ENCODE measurements at regions of chr1 and their contacts with region 1.

Region 1: DNA sequence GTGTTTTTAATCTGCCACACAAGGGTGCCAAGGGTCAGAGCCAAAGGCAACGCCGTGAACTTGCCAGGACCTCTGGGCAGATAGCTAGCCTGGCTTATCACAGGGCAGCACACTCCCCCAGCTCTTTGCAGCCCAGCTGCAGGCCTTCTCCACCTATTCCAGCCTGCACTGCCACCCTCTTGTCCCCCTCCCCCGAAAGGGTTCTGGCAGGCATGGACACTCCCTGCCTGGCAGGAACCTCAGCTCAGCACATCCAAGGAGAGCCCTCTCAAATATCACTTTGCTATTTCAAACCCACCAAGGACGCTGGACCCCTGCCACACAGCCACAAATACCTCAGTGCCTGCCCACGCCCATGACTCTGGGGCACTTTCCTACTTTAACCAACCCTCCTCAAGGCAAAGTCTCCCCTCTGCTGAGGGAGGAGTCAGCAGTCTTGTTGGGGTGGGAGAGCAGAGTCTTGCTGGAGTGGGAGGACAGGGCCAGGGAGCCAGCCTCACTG is 9.1 kb downstream of the SSBP3 start:
- DNase-seq: peak; percentile 74 to 90 (median 77)
- ATAC-seq: peak; percentile 89 to 97 (median 96)
- H3K4me3 ChIP-seq: no peak overlapping the region
- H3K27ac ChIP-seq: peak overlapping the region in 11 of 12 donors; percentile 7 to 80 (median 71)
- H3K4me1 ChIP-seq: peaks cover 0 to 83% (median 30%) of the 10 kb centered on the region in 12 donors
- H3K27me3 ChIP-seq: no peaks in the 10 kb centered on the region
- CTCF ChIP-seq: no peak
- POLR2A ChIP-seq: no peak

Region 2: DNA sequence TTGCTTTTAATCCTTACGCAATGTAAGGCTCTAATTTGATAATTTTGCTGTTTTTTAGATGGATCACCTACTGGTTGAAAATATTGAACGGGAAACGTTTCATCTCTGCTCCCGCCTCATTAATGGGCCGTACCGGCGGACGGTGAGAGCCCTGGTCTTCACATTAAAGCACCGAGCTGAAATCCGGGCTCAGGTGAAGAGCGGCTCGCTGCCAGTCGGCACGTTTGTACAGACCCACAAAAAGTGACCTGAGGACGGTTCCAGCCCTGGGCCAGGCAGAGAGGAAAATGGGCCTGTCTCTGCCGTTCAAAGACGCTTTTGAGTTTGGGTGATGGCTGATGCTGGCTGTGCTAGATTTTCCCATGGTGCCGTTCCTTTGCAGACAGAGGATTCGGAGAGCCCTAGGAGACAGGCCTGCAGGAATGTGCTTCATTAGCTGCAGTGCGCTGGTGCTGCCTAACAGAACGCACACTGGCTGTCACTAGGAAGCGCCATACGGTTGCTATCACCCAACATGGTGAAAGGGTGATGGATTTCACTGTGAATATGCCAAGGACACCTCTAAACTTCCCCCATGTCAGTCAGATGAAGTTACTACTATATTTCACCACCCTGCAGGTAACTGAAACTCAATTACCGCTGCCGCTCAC is 300.8 kb before region 1 on chr1:
- intact Hi-C with region 1: no loop called
- DNase-seq: no peak
- ATAC-seq: no peak
- H3K4me3 ChIP-seq: peak overlapping the region in 1 of 12 donors; percentile 22
- H3K27ac ChIP-seq: peak overlapping the region in 1 of 12 donors; percentile 50
- H3K4me1 ChIP-seq: peaks cover 0 to 13% (median 0%) of the 10 kb centered on the region in 12 donors
- H3K27me3 ChIP-seq: no peaks in the 10 kb centered on the region
- CTCF ChIP-seq: no peak
- POLR2A ChIP-seq: no peak

Region 3: GRCh38 chr1:54323324-54323739 is 73.8 kb before region 1 on chr1:
- intact Hi-C with region 1: loop called in 1 of 10 experiments (anchors 5 kb)
- DNase-seq: no peak
- ATAC-seq: peak in 1 of 4 donors; percentile 16
- H3K4me3 ChIP-seq: no peak overlapping the region
- H3K27ac ChIP-seq: peak overlapping the region in 2 of 12 donors; percentile 12 to 78
- H3K4me1 ChIP-seq: peaks cover 10 to 61% (median 54%) of the 10 kb centered on the region in 12 donors
- H3K27me3 ChIP-seq: no peaks in the 10 kb centered on the region
- CTCF ChIP-seq: peak in 9 of 12 donors; percentile 13 to 42 (median 32)
- POLR2A ChIP-seq: no peak

Region 4: DNA sequence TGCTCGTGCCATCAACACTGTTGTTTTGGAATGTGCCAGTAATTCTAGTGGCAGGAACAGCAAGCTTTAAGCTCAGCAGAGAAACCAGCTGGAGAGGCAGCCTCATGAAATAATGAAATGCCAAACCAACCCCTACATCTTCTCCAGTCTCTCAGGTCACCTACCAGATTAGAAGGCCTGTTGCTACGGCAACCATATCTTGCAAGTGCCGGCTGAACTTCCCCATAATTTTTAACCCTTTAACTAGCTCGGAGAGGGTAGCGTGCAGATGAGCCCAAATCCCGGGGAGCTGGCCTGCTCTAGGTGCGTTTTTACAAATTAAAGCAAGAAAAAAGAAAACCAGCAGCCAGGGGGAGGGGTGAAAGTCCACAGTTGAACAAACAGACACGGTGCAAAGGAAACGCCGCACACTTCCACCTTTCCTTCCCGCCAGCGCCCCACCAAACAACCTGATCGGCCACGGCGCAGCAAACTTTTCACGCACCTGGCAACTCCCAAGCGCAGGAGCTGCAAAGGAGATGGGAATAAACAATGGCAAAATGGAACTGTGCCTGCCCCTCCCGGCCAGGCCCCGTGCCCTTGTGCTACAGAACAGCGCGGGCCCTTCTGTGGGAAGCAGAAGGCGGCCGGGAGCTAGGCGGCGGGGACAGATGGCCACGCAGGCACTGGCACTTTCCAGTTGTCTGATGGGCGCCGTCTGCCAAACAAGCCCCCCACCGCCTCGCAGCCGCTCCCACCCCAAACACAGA is 41.0 kb before region 1 on chr1:
- intact Hi-C with region 1: loop called in 8 of 10 experiments (anchors 2 to 10 kb)
- DNase-seq: no peak
- ATAC-seq: no peak
- H3K4me3 ChIP-seq: peak overlapping the region in 4 of 12 donors; percentile 11 to 39 (median 15)
- H3K27ac ChIP-seq: peak overlapping the region in 5 of 12 donors; percentile 2 to 30 (median 13)
- H3K4me1 ChIP-seq: peaks cover 4 to 86% (median 57%) of the 10 kb centered on the region in 12 donors
- H3K27me3 ChIP-seq: no peaks in the 10 kb centered on the region
- CTCF ChIP-seq: no peak
- POLR2A ChIP-seq: no peak

Region 5: GRCh38 chr1:54379555-54380289 is 17.4 kb before region 1 on chr1:
- intact Hi-C with region 1: loop called in 2 of 10 experiments (anchors 1 to 2 kb)
- DNase-seq: peak; percentile 70 to 78 (median 77)
- ATAC-seq: peak; percentile 51 to 76 (median 71)
- H3K4me3 ChIP-seq: peak overlapping the region in 2 of 12 donors; percentile 6 to 24
- H3K27ac ChIP-seq: peak overlapping the region in 11 of 12 donors; percentile 17 to 85 (median 62)
- H3K4me1 ChIP-seq: peaks cover 0 to 80% (median 60%) of the 10 kb centered on the region in 12 donors
- H3K27me3 ChIP-seq: no peaks in the 10 kb centered on the region
- CTCF ChIP-seq: no peak
- POLR2A ChIP-seq: no peak